BJ (cell line): ENCODE measurements at regions of chr17 and their contacts with region 1.

Region 1: GRCh38 chr17:7989781-7990655 is 12.4 kb upstream of the GUCY2D start:
- DNase-seq: no peak
- H3K4me3 ChIP-seq: peak overlapping the region; percentile 74
- H3K27me3 ChIP-seq: peaks cover 2% of the 10 kb centered on the region; the same call in 1 of the 2 replicates
- CTCF ChIP-seq: peak; percentile 98

Region 2: GRCh38 chr17:7856883-7857723 is 132.9 kb before region 1 on chr17 and contains the start of gene NAA38:
- CTCF ChIA-PET with region 1: interaction called, 15 read pairs
- POLR2A ChIA-PET with region 1: no interaction called
- DNase-seq: peak; percentile 97
- H3K4me3 ChIP-seq: peak within 1 kb of the TSS; percentile 58
- H3K27me3 ChIP-seq: no peaks in the 10 kb centered on the region
- CTCF ChIP-seq: peak; percentile 59
- polyA plus RNA-seq, gene NAA38: 74.9 and 82.7 TPM in 2 replicates

Region 3: GRCh38 chr17:7897773-7898172 is 92.2 kb before region 1 on chr17:
- CTCF ChIA-PET with region 1: interaction called, 35 read pairs
- POLR2A ChIA-PET with region 1: no interaction called
- DNase-seq: no peak
- H3K4me3 ChIP-seq: no peak overlapping the region
- H3K27me3 ChIP-seq: no peaks in the 10 kb centered on the region
- CTCF ChIP-seq: peak; percentile 63

Region 4: GRCh38 chr17:7931709-7932482 is 58.1 kb before region 1 on chr17 and contains the starts of genes CNTROB and TRAPPC1:
- CTCF ChIA-PET with region 1: interaction called, 46 read pairs
- POLR2A ChIA-PET with region 1: no interaction called
- DNase-seq: peak; percentile 97
- H3K4me3 ChIP-seq: peak within 1 kb of the TSS; percentile 68
- H3K27me3 ChIP-seq: no peaks in the 10 kb centered on the region
- CTCF ChIP-seq: no peak
- polyA plus RNA-seq, gene CNTROB: 19.4 and 26.8 TPM in 2 replicates
- polyA plus RNA-seq, gene TRAPPC1: 204 and 264 TPM in 2 replicates

Region 5: GRCh38 chr17:8016632-8017478 is 26.8 kb after region 1 on chr17:
- CTCF ChIA-PET with region 1: interaction called, 13 read pairs
- POLR2A ChIA-PET with region 1: no interaction called
- DNase-seq: no peak
- H3K4me3 ChIP-seq: peak overlapping the region; percentile 32; the same call in 1 of the 2 replicates
- H3K27me3 ChIP-seq: peaks cover 29% of the 10 kb centered on the region
- CTCF ChIP-seq: peak; percentile 52

Region 6: GRCh38 chr17:8057691-8058114 is 67.7 kb after region 1 on chr17:
- CTCF ChIA-PET with region 1: interaction called, 33 read pairs
- POLR2A ChIA-PET with region 1: no interaction called
- DNase-seq: peak; percentile 15
- H3K4me3 ChIP-seq: no peak overlapping the region
- H3K27me3 ChIP-seq: peaks cover 23% of the 10 kb centered on the region
- CTCF ChIP-seq: peak; percentile 69

Region 7: GRCh38 chr17:8158267-8159031 is 168.4 kb after region 1 on chr17:
- CTCF ChIA-PET with region 1: no interaction called
- POLR2A ChIA-PET with region 1: no interaction called
- DNase-seq: no peak
- H3K4me3 ChIP-seq: no peak overlapping the region
- H3K27me3 ChIP-seq: no peaks in the 10 kb centered on the region
- CTCF ChIP-seq: peak; percentile 87